ENCODE measurements at regions of chr1 and their contacts with region 1.

Region 1: GRCh38 chr1:23539698-23540266 is 8.7 kb upstream of the E2F2 start:
- DNase-seq: peak; percentile 82 to 94 (median 88)
- H3K4me3 ChIP-seq: no peak overlapping the region
- H3K4me3 Mint-ChIP-seq: peak overlapping the region in 5 of 7 donors; percentile 29 to 65 (median 62)
- H3K27ac ChIP-seq: peak overlapping the region; percentile 22
- H3K27ac Mint-ChIP-seq: peak overlapping the region in 7 of 8 donors; percentile 12 to 85 (median 74)
- H3K4me1 ChIP-seq: peaks cover 13% of the 10 kb centered on the region
- H3K4me1 Mint-ChIP-seq: peaks cover 12 to 17% (median 16%) of the 10 kb centered on the region in 3 donors
- H3K27me3 ChIP-seq: no peaks in the 10 kb centered on the region
- H3K27me3 Mint-ChIP-seq: peaks cover 0 to 6% of the 10 kb centered on the region in 2 donors

Region 2: GRCh38 chr1:23507507-23507906 is 32.3 kb before region 1 on chr1:
- CTCF ChIA-PET with region 1: interaction called, 588 read pairs
- POLR2A ChIA-PET with region 1: no interaction called
- DNase-seq: no peak
- H3K4me3 ChIP-seq: no peak overlapping the region
- H3K4me3 Mint-ChIP-seq: no peak overlapping the region
- H3K27ac ChIP-seq: no peak overlapping the region
- H3K27ac Mint-ChIP-seq: peak overlapping the region in 2 of 8 donors; percentile 22 to 38
- H3K4me1 ChIP-seq: no peaks in the 10 kb centered on the region
- H3K4me1 Mint-ChIP-seq: no peaks in the 10 kb centered on the region
- H3K27me3 ChIP-seq: no peaks in the 10 kb centered on the region
- H3K27me3 Mint-ChIP-seq: no peaks in the 10 kb centered on the region

Region 3: DNA sequence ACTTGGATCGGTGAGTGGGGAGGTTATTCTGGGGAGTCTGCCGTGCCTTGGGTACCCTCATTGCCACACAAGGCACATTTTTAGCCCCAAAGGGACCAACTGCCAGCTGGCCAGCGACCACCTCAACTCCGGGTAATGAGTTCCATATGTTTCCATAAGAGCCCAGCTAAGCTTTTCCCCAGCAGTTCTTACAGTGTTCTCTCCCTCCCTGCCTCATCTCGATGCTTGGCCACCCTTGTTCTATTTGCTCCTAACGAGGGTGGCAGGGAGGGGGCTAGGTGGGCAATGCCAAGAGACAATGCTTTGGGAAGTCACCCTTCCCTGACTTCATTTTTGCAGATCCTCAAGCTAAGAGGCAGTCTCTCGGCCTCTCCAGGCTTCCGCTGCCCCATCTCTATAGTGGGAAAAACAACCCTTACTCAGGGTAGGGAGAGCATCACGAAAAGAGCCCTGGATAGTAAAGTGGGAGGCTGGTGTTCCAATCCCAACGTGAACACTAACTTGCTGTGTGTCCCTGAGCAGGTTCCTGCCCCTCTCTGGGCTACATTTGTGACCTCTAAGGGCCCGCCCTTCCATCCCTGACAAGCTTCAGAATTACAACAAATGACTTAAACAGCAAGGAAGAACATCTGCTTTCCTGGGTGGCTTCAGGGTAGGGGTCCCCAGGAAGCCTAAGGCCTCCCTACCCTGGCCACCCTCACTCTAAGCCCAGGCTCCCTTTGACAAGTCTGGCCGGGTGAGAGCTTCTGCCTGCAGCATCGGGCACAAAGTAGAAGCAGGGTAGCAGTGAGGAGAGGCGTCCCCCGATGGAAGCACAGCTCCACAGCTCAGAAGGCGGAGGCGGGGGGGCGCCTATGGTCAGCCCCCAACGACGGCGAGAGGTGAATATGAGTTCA is 13.7 kb after region 1 on chr1:
- CTCF ChIA-PET with region 1: interaction called, 26 read pairs
- POLR2A ChIA-PET with region 1: interaction called, 4 read pairs
- DNase-seq: peak in 1 of 5 donors; percentile 23
- H3K4me3 ChIP-seq: no peak overlapping the region
- H3K4me3 Mint-ChIP-seq: peak overlapping the region; percentile 69 to 92 (median 84)
- H3K27ac ChIP-seq: peak overlapping the region; percentile 85
- H3K27ac Mint-ChIP-seq: peak overlapping the region; percentile 43 to 97 (median 92)
- H3K4me1 ChIP-seq: peaks cover 44% of the 10 kb centered on the region
- H3K4me1 Mint-ChIP-seq: peaks cover 40 to 52% (median 45%) of the 10 kb centered on the region in 3 donors
- H3K27me3 ChIP-seq: no peaks in the 10 kb centered on the region
- H3K27me3 Mint-ChIP-seq: peaks cover 0 to 2% of the 10 kb centered on the region in 2 donors

Region 4: GRCh38 chr1:23619299-23620188 is 79.8 kb after region 1 on chr1:
- CTCF ChIA-PET with region 1: interaction called, 23 read pairs
- POLR2A ChIA-PET with region 1: interaction called, 5 read pairs
- DNase-seq: peak; percentile 68 to 92 (median 82)
- H3K4me3 ChIP-seq: peak overlapping the region; percentile 61
- H3K4me3 Mint-ChIP-seq: peak overlapping the region; percentile 79 to 88 (median 83)
- H3K27ac ChIP-seq: peak overlapping the region; percentile 34
- H3K27ac Mint-ChIP-seq: peak overlapping the region; percentile 81 to 97 (median 94)
- H3K4me1 ChIP-seq: peaks cover 83% of the 10 kb centered on the region
- H3K4me1 Mint-ChIP-seq: peaks cover 71 to 88% (median 87%) of the 10 kb centered on the region in 3 donors
- H3K27me3 ChIP-seq: no peaks in the 10 kb centered on the region
- H3K27me3 Mint-ChIP-seq: peaks cover 0 to 2% of the 10 kb centered on the region in 2 donors

Measured in CD8-positive, alpha-beta memory T cell (primary cell).